Colonic mucosa (tissue), 4 donors: ENCODE measurements at regions of chr12 and their contacts with region 1.

Region 1: GRCh38 chr12:91326058-91327027 is 143.7 kb upstream of the DCN start:
- DNase-seq: peak; percentile 69
- H3K4me3 ChIP-seq: no peak overlapping the region
- H3K27ac ChIP-seq: peak overlapping the region; percentile 3
- H3K4me1 ChIP-seq: no peaks in the 10 kb centered on the region
- H3K27me3 ChIP-seq: no peaks in the 10 kb centered on the region
- CTCF ChIP-seq: peak; percentile 66

Region 2: DNA sequence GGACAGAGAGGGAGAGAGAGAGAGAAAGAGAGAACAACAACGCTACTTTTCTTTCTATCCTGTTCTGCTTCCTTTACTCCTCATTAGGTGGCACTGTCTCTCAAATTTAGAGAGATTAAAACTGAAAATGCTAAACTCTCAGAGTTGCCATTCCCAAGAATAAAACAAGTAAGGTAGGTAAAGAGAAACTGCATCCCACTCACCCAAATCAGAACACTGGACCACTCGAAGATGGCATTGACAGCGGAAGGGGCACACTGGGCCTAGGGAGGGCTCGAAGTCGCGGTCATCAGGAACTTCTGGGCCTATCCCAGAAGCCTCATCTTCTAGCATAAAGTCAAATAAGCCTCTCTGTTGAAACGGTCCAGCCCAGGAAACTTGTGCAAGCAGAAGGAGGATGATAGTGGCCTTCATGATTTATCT is 148.2 kb before region 1 on chr12:
- intact Hi-C with region 1: loop called (anchors 5 kb)
- DNase-seq: no peak
- H3K4me3 ChIP-seq: no peak overlapping the region
- H3K27ac ChIP-seq: peak overlapping the region; percentile 10
- H3K4me1 ChIP-seq: no peaks in the 10 kb centered on the region
- H3K27me3 ChIP-seq: no peaks in the 10 kb centered on the region
- CTCF ChIP-seq: peak; percentile 22

Region 3: GRCh38 chr12:91413581-91414546 is 87.5 kb after region 1 on chr12:
- intact Hi-C with region 1: no loop called
- DNase-seq: peak; percentile 40
- H3K4me3 ChIP-seq: no peak overlapping the region
- H3K27ac ChIP-seq: peak overlapping the region; percentile 37
- H3K4me1 ChIP-seq: no peaks in the 10 kb centered on the region
- H3K27me3 ChIP-seq: no peaks in the 10 kb centered on the region
- CTCF ChIP-seq: no peak